Ascending aorta (tissue), 2 donors: ENCODE measurements at regions of chr11 and their contacts with region 1.

Region 1: GRCh38 chr11:18105802-18106574 is at the start of gene SAAL1:
- DNase-seq: peak; percentile 18 to 90
- H3K4me3 ChIP-seq: peak within 1 kb of the TSS; percentile 72 to 92
- H3K27ac ChIP-seq: peak within 1 kb of the TSS; percentile 42 to 54
- H3K4me1 ChIP-seq: peaks cover 0 to 5% of the 10 kb centered on the region in 2 donors
- H3K27me3 ChIP-seq: no peaks in the 10 kb centered on the region
- CTCF ChIP-seq: peak; percentile 57 to 89 (median 70)
- total RNA-seq, gene SAAL1: 29.1 TPM

Region 2: DNA sequence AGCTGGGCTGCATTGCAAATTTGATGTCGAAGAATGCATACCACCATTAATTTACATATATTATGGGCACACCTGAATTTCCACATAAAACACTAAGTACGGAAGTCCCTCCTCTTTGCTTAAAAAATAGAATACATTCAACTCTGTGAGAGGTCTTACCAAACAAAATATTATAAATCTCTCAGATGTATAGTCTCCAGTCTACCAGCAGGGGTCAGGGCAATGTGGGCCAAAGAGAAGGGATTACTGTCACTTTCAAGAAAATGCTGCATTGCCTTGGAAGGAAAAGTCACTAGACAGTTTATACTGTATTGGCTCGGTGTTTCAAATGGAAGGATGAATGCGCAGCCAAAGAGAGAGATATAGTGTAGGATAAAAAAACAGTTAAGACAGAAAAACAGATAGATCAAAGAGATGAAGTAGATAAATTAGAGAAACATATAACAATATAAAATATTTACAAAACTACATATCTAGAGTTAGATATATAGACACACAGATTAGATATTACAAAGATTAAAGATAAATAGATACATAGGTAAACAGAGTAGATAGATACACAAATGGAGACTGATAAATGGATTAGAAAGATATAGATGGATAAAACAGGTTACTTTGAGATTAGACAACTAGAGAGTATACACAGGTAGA is 114.1 kb before region 1 on chr11:
- intact Hi-C with region 1: loop called (anchors 5 kb)
- DNase-seq: no peak
- H3K4me3 ChIP-seq: no peak overlapping the region
- H3K27ac ChIP-seq: no peak overlapping the region
- H3K4me1 ChIP-seq: peaks cover 0 to under 1% of the 10 kb centered on the region in 2 donors
- H3K27me3 ChIP-seq: no peaks in the 10 kb centered on the region
- CTCF ChIP-seq: peak; percentile 55 to 78 (median 76)

Region 3: DNA sequence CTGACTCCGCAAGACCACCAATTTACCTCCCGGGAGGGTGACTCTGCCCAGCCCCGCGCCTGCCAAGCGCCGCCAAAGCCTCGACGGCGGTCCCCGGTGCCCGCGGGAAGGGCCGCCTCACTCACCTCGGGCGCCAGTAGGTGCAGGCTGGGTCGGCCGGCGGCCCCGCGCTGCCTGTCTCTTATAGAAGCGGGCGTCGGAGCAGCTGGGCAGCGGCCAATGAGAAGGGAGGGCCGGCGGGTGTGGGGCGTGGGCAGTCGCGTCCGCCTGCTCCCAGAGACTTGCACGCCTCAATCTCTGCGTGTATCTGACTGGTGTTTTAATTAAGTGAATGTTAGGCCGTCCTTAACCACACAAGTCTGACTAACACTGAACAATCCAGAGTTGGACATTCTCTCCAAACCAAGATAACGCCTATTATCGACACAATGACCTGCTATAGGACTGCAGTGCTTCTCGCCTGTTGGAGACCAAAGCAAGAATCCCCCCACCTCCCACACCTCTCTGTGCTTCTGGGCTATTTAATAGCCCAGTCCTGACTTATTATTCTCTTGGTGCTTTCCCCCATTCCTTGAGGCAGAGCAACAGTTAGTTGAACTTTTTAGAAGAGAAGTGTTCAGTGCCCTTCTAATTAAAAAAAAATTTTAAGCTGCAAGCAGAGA is 59.7 kb before region 1 on chr11 and contains the start of gene TPH1:
- intact Hi-C with region 1: loop called (anchors 5 kb)
- DNase-seq: peak; percentile 12 to 83
- H3K4me3 ChIP-seq: peak within 1 kb of the TSS; percentile 48 to 67
- H3K27ac ChIP-seq: peak within 1 kb of the TSS; percentile 77 to 80
- H3K4me1 ChIP-seq: no peaks in the 10 kb centered on the region
- H3K27me3 ChIP-seq: no peaks in the 10 kb centered on the region
- CTCF ChIP-seq: no peak
- total RNA-seq, gene TPH1: 1.8 TPM